Activated T-helper 1 cell treated with anti-CD3 and anti-CD28 coated beads, Interleukin-12 subunit alpha, Interleukin-12 subunit beta, Interleukin-2, Interleukin-4 antibody, amounts not matched to agents 30 ng/mL and 10 ng/mL and 1 ng/mL, durations not matched to agents 14 hours and 24 hours and 36 hours (primary cell): ENCODE measurements at regions of chr11 and their contacts with region 1.

Region 1: GRCh38 chr11:85947431-85948272 is 92.5 kb downstream of the CCDC83 start:
- DNase-seq: peak; percentile 6
- H3K4me3 Mint-ChIP-seq: peak overlapping the region; percentile 7
- H3K27ac Mint-ChIP-seq: peak overlapping the region; percentile 93
- H3K4me1 Mint-ChIP-seq: peaks cover 60% of the 10 kb centered on the region
- H3K27me3 Mint-ChIP-seq: no peaks in the 10 kb centered on the region

Region 2: GRCh38 chr11:85595285-85595884 is 352.3 kb before region 1 on chr11:
- intact Hi-C with region 1: loop called (anchors 5 kb)
- DNase-seq: no peak
- H3K4me3 Mint-ChIP-seq: no peak overlapping the region
- H3K27ac Mint-ChIP-seq: no peak overlapping the region
- H3K4me1 Mint-ChIP-seq: no peaks in the 10 kb centered on the region
- H3K27me3 Mint-ChIP-seq: peaks cover 6% of the 10 kb centered on the region

Region 3: DNA sequence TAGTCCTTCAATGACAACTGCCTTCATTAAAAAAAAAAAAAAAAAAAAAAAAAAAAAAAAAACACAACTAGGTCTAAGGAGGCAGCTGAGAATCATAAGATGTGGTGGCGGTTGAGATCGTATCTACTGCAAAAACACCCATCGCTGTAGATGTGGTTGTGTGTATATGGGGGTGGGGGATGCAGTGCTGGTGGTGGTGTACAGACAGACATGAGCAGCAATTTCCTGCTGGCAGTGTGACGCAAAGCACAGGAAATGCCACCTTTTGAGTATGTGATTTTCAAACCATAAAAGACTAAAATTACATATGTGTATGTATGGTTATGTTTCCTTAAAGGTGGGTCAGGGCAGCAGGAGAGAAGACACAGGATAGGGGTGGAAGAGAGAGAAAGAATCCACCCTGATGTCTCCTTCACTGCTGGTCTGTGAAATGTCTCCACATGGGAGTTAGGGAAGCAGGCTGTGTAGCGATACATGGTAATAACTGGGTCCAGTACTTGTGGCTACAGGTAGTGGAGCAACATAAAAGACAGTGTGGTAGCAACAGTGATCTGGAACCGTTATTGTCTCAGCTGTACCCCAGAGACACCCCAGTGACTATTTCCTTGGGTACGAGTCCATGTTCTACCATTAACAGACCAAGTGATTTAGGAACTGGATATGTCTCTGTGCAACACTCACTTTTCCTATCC is 194.6 kb before region 1 on chr11:
- intact Hi-C with region 1: loop called (anchors 2 kb)
- DNase-seq: peak; percentile 89
- H3K4me3 Mint-ChIP-seq: peak overlapping the region; percentile 73
- H3K27ac Mint-ChIP-seq: peak overlapping the region; percentile 98
- H3K4me1 Mint-ChIP-seq: peaks cover 99% of the 10 kb centered on the region
- H3K27me3 Mint-ChIP-seq: peaks cover 4% of the 10 kb centered on the region

Region 4: GRCh38 chr11:86021377-86021776 is 73.7 kb after region 1 on chr11:
- intact Hi-C with region 1: loop called (anchors 5 kb)
- DNase-seq: no peak
- H3K4me3 Mint-ChIP-seq: no peak overlapping the region
- H3K27ac Mint-ChIP-seq: peak overlapping the region; percentile 75
- H3K4me1 Mint-ChIP-seq: peaks cover 56% of the 10 kb centered on the region
- H3K27me3 Mint-ChIP-seq: no peaks in the 10 kb centered on the region

Region 5: GRCh38 chr11:86062719-86063118 is 115.1 kb after region 1 on chr11:
- intact Hi-C with region 1: no loop called
- DNase-seq: no peak
- H3K4me3 Mint-ChIP-seq: peak overlapping the region; percentile 78
- H3K27ac Mint-ChIP-seq: peak overlapping the region; percentile 61
- H3K4me1 Mint-ChIP-seq: peaks cover 76% of the 10 kb centered on the region
- H3K27me3 Mint-ChIP-seq: no peaks in the 10 kb centered on the region

Region 6: GRCh38 chr11:86218125-86219084 is 270.8 kb after region 1 on chr11:
- intact Hi-C with region 1: loop called (anchors 1 kb)
- DNase-seq: peak; percentile 42
- H3K4me3 Mint-ChIP-seq: peak overlapping the region; percentile 40
- H3K27ac Mint-ChIP-seq: peak overlapping the region; percentile 81
- H3K4me1 Mint-ChIP-seq: peaks cover 81% of the 10 kb centered on the region
- H3K27me3 Mint-ChIP-seq: no peaks in the 10 kb centered on the region

Region 7: DNA sequence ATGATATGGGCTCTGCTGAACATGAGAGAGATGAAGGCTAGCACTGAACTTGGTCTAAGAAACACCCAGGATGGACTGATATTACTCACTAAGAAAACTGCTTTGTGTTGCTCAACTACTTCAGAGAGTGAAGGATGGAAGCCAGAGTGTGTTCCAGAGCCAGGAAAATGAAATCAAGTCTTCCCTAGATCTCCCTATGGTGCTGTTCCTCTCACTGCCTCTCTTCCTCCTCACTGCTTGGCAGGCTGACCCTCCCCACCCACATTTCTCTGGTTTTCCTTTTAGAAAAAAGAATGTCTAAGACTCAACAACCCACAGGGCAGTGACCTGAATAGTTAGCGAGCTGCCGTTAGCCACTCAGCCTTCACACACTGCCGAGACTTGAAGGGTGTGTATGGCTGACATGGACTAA is 492.7 kb after region 1 on chr11:
- intact Hi-C with region 1: loop called (anchors 2 kb)
- DNase-seq: no peak
- H3K4me3 Mint-ChIP-seq: no peak overlapping the region
- H3K27ac Mint-ChIP-seq: peak overlapping the region; percentile 71
- H3K4me1 Mint-ChIP-seq: peaks cover 57% of the 10 kb centered on the region
- H3K27me3 Mint-ChIP-seq: no peaks in the 10 kb centered on the region